ENCODE measurements at regions of chr18 and their contacts with region 1.

Region 1: GRCh38 chr18:12038639-12039417 is 54.8 kb upstream of the ANKRD62 start:
- DNase-seq: peak; percentile 91
- CTCF ChIP-seq: peak; percentile 100

Region 2: GRCh38 chr18:11733031-11733430 is 305.8 kb before region 1 on chr18:
- in situ Hi-C with region 1: loop called (anchors 25 kb)
- DNase-seq: peak; percentile 79
- CTCF ChIP-seq: peak; percentile 94

Measured in GM13977 (cell line).